Heart left ventricle (tissue), 16 donors: ENCODE measurements at regions of chr3 and their contacts with region 1.

Region 1: DNA sequence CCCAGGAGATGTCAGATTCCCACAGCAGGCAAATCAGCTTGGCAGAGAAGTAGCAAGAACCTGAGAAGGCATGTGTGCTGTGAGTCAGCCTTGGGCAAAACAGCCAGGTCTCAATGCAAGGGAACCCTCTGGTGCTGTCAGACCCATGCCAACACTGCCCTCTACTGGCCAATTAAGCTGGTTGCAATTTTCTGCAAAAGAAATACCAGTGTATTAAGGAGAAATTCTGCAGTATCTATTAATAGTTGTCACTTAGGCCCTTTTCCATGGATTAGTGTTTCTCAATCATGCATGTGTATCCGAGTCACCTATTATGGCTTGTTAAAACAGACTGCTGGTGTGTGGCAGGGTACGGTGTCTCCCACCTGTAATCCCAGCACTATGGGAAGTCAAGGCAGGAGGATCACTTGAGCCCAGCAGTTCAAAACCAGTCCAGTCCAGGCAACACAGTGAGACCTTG is 26.2 kb downstream of the MAP4 start:
- DNase-seq: peak; percentile 69 to 85 (median 79)
- ATAC-seq: peak; percentile 85 to 97 (median 95)
- H3K4me3 ChIP-seq: no peak overlapping the region
- H3K27ac ChIP-seq: peak overlapping the region in 1 of 12 donors; percentile 7
- H3K4me1 ChIP-seq: peaks cover 0 to 38% (median 26%) of the 10 kb centered on the region in 12 donors
- H3K27me3 ChIP-seq: no peaks in the 10 kb centered on the region
- CTCF ChIP-seq: peak; percentile 85 to 95 (median 91)
- POLR2A ChIP-seq: no peak

Region 2: GRCh38 chr3:47824541-47825473 is 165.2 kb before region 1 on chr3:
- intact Hi-C with region 1: loop called in 1 of 10 experiments (anchors 5 kb)
- DNase-seq: peak; percentile 75 to 89 (median 80)
- ATAC-seq: peak; percentile 83 to 99 (median 98)
- H3K4me3 ChIP-seq: peak overlapping the region; percentile 49 to 99 (median 84)
- H3K27ac ChIP-seq: peak overlapping the region; percentile 1 to 90 (median 82)
- H3K4me1 ChIP-seq: peaks cover 0 to 25% (median 20%) of the 10 kb centered on the region in 12 donors
- H3K27me3 ChIP-seq: no peaks in the 10 kb centered on the region
- CTCF ChIP-seq: peak; percentile 74 to 94 (median 87)
- POLR2A ChIP-seq: peak in 1 of 2 donors; percentile 37

Region 3: DNA sequence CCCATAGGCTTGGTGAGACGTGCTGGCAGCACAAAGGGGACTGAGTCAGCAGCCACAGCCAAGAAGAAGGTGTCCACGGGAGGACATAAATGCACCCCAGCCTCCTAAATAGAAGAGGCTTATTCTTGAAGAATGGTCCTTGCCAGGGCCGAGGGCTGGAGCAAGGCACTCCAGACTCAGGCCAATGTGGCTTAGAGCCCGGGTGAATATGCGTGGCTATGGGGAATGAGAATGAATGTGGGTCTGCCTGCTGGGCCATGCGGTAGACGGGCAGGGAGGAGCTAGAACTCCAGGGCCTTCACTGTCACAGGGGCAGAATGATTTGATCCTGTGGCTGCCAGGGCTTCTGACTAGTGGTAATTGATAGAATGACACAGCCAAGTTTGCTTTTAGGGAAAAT is 153.0 kb before region 1 on chr3:
- intact Hi-C with region 1: loop called in 9 of 10 experiments (anchors 2 to 5 kb)
- DNase-seq: no peak
- ATAC-seq: no peak
- H3K4me3 ChIP-seq: no peak overlapping the region
- H3K27ac ChIP-seq: no peak overlapping the region
- H3K4me1 ChIP-seq: peaks cover 0 to 8% (median 0%) of the 10 kb centered on the region in 12 donors
- H3K27me3 ChIP-seq: no peaks in the 10 kb centered on the region
- CTCF ChIP-seq: no peak
- POLR2A ChIP-seq: no peak

Region 4: DNA sequence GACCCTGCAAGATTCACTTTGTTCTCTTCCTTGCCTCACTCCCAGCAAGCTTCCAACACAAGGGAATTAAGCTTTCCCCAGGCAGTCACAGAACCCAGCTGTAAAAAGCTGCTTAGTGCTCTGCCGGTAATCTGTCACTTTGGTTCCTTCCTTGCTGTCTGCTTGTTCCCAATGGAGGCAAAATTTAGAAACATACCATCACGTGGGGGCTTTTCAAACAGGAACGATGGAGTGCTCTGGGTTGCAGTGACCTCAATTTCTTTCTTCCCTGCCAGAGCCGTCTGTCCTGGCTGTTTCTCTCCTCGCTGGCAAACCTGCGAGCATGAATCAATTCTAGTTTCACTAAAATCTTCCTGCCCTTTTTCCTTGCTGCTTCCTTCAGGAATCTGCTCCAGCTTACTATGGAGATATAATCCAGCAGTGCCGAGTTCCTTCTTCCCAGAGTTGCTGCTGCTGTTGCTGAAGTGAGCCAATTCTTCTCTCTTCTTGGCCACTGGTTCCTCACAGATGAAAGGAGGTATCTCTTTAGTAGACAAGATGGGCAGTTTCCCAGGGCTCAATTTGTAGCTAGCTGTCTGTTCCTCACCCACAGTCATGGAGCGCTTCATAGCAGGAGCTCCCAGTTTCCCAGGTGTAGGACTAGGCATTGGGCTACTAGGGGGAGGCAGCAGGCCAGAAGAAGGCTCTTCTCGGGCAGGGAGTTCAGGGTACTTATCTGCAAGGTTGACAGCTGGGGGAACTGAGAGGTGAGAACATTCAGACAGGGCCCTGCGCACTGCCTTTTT is 99.0 kb before region 1 on chr3:
- intact Hi-C with region 1: loop called in 2 of 10 experiments (anchors 10 kb)
- DNase-seq: peak in 4 of 5 donors; percentile 54 to 68 (median 64)
- ATAC-seq: peak; percentile 90 to 92 (median 90)
- H3K4me3 ChIP-seq: peak overlapping the region in 1 of 12 donors; percentile 5
- H3K27ac ChIP-seq: peak overlapping the region; percentile 47 to 85 (median 74)
- H3K4me1 ChIP-seq: peaks cover 7 to 86% (median 50%) of the 10 kb centered on the region in 12 donors
- H3K27me3 ChIP-seq: no peaks in the 10 kb centered on the region
- CTCF ChIP-seq: no peak
- POLR2A ChIP-seq: no peak

Region 5: GRCh38 chr3:48013288-48013980 is 23.4 kb after region 1 on chr3:
- intact Hi-C with region 1: loop called in 1 of 10 experiments (anchors 2 kb)
- DNase-seq: peak in 3 of 5 donors; percentile 37 to 55 (median 38)
- ATAC-seq: peak; percentile 88 to 92 (median 89)
- H3K4me3 ChIP-seq: peak overlapping the region in 8 of 12 donors; percentile 22 to 50 (median 42)
- H3K27ac ChIP-seq: peak overlapping the region; percentile 58 to 87 (median 80)
- H3K4me1 ChIP-seq: peaks cover 0 to 97% (median 60%) of the 10 kb centered on the region in 12 donors
- H3K27me3 ChIP-seq: no peaks in the 10 kb centered on the region
- CTCF ChIP-seq: no peak
- POLR2A ChIP-seq: no peak

Region 6: DNA sequence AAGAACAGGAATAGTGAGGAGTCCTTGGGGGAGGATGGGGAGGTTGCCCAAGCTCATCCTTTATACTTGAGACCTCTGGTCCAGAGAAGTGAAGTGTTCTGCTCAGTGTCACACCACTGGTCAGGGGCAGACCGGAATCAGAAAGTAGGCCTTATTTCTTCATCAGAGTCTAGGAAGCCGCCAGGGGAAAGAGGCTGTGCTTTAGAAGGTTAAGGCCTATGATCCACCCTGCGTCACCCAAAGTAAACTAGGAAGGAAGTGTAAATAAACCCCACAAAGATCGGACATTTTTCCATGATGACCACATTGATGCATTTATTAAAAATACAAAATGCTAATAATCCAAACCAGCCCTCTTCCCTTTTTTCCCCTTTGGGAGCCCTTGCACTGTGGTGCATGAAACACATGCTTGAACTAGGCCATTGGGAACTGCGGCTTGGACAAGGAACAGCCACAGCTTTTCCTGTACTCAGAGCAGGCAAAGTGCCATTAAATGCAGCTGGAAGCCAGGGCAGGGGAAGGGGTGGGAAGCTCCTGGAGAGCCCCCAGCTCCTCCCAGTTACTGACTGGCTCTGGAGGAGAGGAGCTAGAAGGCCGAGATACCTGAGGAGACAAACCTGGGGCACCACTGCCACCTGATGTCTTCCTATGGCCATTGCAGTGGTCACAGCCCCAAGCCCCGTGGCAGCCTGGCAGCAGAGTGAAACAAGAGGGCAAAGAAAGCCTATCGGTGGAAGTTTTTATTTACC is 161.2 kb after region 1 on chr3:
- intact Hi-C with region 1: loop called (anchors 2 to 10 kb)
- DNase-seq: peak; percentile 80 to 86 (median 82)
- ATAC-seq: peak; percentile 94 to 98 (median 96)
- H3K4me3 ChIP-seq: peak overlapping the region in 2 of 12 donors; percentile 8
- H3K27ac ChIP-seq: peak overlapping the region in 10 of 12 donors; percentile 1 to 74 (median 59)
- H3K4me1 ChIP-seq: peaks cover 0 to 22% (median 17%) of the 10 kb centered on the region in 12 donors
- H3K27me3 ChIP-seq: no peaks in the 10 kb centered on the region
- CTCF ChIP-seq: peak; percentile 53 to 93 (median 84)
- POLR2A ChIP-seq: no peak